Breast epithelium (tissue), 4 donors: ENCODE measurements at regions of chr2 and their contacts with region 1.

Region 1: DNA sequence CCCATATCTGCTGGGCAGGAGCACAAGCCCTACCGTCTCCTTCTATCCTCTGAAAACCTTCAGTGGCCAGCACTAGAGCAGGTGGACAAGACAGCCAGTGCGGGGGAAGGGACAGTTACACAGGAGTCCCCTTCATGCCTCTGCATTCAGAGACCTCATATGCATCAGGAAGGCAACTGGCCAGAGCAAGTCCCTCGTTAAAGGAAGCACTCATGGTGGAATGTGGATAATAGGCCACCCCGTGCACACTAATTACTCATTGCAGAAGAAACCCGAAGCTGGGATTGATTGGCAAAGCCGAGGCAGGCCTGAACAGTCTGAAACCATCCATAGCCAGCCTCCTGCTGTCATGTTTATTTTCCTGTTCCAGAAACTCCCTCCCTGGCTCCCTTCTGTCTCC is 11.2 kb downstream of the KIAA2012 start:
- DNase-seq: no peak
- H3K4me3 ChIP-seq: no peak overlapping the region
- H3K27ac ChIP-seq: no peak overlapping the region
- H3K4me1 ChIP-seq: no peaks in the 10 kb centered on the region
- H3K27me3 ChIP-seq: no peaks in the 10 kb centered on the region
- CTCF ChIP-seq: no peak
- POLR2A ChIP-seq: no peak

Region 2: DNA sequence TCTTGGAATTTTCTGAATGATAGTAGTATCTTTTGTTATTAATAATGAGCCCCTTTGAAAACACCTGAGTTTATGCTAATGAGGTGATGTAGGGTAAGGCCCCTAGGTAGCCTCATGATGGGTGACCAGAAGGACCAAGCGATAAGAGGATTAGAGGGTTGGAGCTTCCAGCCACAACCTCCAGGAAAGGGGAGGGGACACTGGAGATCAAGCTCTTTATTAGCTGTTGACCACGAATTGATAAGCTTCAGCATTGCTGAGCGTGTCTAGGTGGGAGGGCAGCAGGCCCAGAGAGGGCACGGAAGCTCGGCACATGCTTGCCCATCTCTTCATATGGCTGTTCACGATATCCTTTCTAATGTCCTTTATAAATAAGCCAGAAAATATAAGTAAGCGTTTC is 27.8 kb after region 1 on chr2:
- intact Hi-C with region 1: loop called (anchors 1 kb)
- DNase-seq: no peak
- H3K4me3 ChIP-seq: no peak overlapping the region
- H3K27ac ChIP-seq: no peak overlapping the region
- H3K4me1 ChIP-seq: no peaks in the 10 kb centered on the region
- H3K27me3 ChIP-seq: no peaks in the 10 kb centered on the region
- CTCF ChIP-seq: no peak
- POLR2A ChIP-seq: no peak

Region 3: DNA sequence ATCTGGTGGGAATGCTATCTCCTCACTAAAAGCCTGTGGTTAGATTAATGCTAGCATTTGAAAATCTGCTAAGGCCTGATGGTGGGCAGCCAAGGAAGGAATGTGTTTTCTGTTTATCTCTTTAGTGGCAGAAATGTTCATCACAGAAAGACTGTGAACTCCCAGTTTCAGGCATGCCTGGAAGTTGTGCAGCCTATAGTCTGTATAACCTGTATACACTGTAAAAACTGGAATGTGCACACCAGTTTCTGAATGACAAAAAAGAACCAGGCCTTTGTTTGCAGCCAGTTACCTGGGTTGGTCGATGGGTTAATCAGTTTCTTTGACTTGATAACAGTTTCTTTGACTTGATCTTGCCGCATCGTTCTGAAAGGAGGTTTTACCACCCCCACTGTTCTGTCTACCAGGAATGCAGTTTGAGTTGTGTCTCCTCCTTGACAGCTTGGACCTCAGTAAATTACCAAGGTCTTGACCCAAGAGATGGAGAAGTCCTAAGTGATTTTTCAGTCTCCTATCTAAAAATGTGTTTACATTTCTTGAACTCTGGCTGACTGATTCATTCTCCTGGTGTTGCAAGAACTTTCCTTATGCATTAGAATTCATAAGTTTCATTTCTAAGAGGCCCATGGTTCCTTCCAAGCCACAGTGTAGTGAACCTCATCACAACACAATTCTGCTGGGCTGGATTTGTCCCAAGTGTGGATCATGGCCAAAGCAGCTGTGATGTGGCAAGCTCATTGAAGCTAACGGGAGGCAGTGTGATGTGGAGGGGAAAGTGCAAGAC is 51.0 kb after region 1 on chr2:
- intact Hi-C with region 1: no loop called
- DNase-seq: peak in 1 of 2 donors; percentile 78
- H3K4me3 ChIP-seq: no peak overlapping the region
- H3K27ac ChIP-seq: peak overlapping the region in 1 of 2 donors; percentile 61
- H3K4me1 ChIP-seq: no peaks in the 10 kb centered on the region
- H3K27me3 ChIP-seq: no peaks in the 10 kb centered on the region
- CTCF ChIP-seq: no peak
- POLR2A ChIP-seq: no peak